ENCODE measurements at regions of chr6 and their contacts with region 1.

Region 1: DNA sequence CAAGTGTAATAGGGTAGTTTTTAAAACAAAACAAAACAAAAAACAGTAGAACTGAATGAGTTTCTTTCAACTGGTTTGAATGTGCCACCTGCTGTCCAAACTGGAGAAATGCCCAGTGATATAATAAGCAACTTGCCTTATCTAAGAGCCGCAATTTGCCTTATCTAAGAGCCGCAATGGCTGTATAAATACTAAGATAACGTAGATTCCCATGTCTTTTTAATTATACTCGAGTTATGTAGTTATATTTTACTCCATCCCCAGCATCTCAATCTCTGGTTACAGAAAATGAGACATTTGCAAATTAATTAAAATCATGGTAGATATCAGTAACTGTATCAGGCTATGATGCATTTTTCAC is 67.2 kb downstream of the RPP40 start:
- DNase-seq: no peak
- ATAC-seq: peak; percentile 50
- H3K4me3 Mint-ChIP-seq: no peak overlapping the region
- H3K27ac Mint-ChIP-seq: no peak overlapping the region
- H3K4me1 Mint-ChIP-seq: peaks cover 20% of the 10 kb centered on the region
- H3K27me3 Mint-ChIP-seq: no peaks in the 10 kb centered on the region
- CTCF ChIP-seq: no peak

Region 2: GRCh38 chr6:4055420-4056041 is 881.1 kb before region 1 on chr6:
- CTCF ChIA-PET with region 1: no interaction called
- POLR2A ChIA-PET with region 1: no interaction called
- intact Hi-C with region 1: loop called (anchors 10 kb)
- DNase-seq: no peak
- ATAC-seq: no peak
- H3K4me3 Mint-ChIP-seq: no peak overlapping the region
- H3K27ac Mint-ChIP-seq: no peak overlapping the region
- H3K4me1 Mint-ChIP-seq: no peaks in the 10 kb centered on the region
- H3K27me3 Mint-ChIP-seq: no peaks in the 10 kb centered on the region
- CTCF ChIP-seq: no peak

Region 3: DNA sequence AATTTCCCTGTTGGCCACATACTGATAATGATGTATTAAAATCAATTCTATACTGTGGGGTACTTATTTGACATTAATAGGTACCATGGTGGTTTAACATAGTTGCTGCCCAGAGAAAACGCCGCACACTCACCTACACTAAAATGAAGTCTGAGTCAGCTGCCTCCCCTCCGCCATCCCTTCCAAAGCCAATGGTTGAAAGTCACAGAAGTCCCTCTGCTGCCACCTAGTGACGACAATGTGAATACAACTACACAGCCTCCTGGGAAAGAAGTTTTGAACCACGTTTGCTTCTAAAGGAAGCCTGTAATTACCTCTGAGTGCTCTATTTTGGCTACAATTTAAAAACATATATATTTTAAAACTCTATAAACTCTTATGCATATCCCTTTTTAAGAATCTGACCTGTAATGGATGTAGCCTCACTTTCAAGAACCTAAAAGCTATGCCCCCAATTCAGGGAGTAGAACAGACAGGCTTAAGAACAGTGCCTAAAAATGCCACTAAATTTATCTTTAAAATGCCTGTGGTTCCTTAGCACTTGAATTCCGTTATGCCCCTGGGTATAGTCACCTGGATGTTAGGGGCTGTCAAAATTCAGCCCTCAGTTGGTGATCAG is 780.7 kb before region 1 on chr6:
- CTCF ChIA-PET with region 1: no interaction called
- POLR2A ChIA-PET with region 1: no interaction called
- intact Hi-C with region 1: loop called (anchors 10 kb)
- DNase-seq: no peak
- ATAC-seq: peak; percentile 84
- H3K4me3 Mint-ChIP-seq: no peak overlapping the region
- H3K27ac Mint-ChIP-seq: peak overlapping the region; percentile 5
- H3K4me1 Mint-ChIP-seq: peaks cover 34% of the 10 kb centered on the region
- H3K27me3 Mint-ChIP-seq: no peaks in the 10 kb centered on the region
- CTCF ChIP-seq: peak; percentile 68

Region 4: GRCh38 chr6:4180652-4181255 is 755.9 kb before region 1 on chr6:
- CTCF ChIA-PET with region 1: no interaction called
- POLR2A ChIA-PET with region 1: no interaction called
- intact Hi-C with region 1: no loop called
- DNase-seq: no peak
- ATAC-seq: no peak
- H3K4me3 Mint-ChIP-seq: no peak overlapping the region
- H3K27ac Mint-ChIP-seq: no peak overlapping the region
- H3K4me1 Mint-ChIP-seq: no peaks in the 10 kb centered on the region
- H3K27me3 Mint-ChIP-seq: peaks cover 17% of the 10 kb centered on the region
- CTCF ChIP-seq: no peak

Region 5: DNA sequence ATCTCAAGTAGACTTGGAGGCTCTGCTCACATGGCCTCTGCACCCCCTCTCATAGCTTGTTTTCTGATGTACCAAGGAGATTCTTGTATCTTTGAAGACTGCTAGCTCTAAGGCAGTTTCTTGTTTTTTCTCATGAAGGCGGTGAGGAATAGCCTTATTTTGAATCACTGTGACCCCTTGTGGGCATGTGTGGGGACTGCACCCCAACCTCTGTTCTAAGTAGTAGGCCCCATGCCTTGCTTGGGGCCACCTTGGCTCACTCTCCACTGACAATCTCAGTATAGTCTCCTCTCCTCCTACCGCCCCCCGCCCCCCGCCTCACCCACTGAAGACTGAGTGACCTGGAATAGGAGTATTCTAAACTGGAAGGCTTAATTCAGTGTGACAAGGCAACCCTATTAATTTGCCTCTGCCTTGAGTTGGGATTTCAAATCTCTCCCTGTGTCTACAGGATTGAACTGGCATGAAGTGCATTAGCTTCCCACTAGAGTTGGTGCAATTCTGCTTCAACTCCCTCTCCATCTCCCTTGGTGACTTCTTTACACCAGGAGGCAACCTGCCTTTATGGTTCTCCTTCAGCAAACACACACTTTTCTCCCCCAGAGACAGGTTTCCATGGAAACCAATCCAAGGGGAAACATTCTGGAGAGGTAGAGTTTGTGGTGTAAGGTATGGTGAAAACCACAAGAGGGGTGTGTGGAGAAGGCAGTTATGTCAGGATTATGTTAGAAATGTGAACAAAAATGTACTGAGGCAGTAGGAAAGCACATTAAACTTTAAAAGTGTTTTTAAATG is 725.8 kb before region 1 on chr6:
- CTCF ChIA-PET with region 1: no interaction called
- POLR2A ChIA-PET with region 1: no interaction called
- intact Hi-C with region 1: loop called (anchors 2 kb)
- DNase-seq: peak; percentile 28
- ATAC-seq: peak; percentile 95
- H3K4me3 Mint-ChIP-seq: peak overlapping the region; percentile 44
- H3K27ac Mint-ChIP-seq: peak overlapping the region; percentile 75
- H3K4me1 Mint-ChIP-seq: peaks cover 38% of the 10 kb centered on the region
- H3K27me3 Mint-ChIP-seq: peaks cover 5% of the 10 kb centered on the region
- CTCF ChIP-seq: no peak

Region 6: GRCh38 chr6:4313044-4313686 is 623.5 kb before region 1 on chr6:
- CTCF ChIA-PET with region 1: interaction called, 3 read pairs
- POLR2A ChIA-PET with region 1: no interaction called
- intact Hi-C with region 1: loop called (anchors 2 kb)
- DNase-seq: no peak
- ATAC-seq: no peak
- H3K4me3 Mint-ChIP-seq: no peak overlapping the region
- H3K27ac Mint-ChIP-seq: no peak overlapping the region
- H3K4me1 Mint-ChIP-seq: peaks cover 17% of the 10 kb centered on the region
- H3K27me3 Mint-ChIP-seq: peaks cover 2% of the 10 kb centered on the region
- CTCF ChIP-seq: no peak

Region 7: DNA sequence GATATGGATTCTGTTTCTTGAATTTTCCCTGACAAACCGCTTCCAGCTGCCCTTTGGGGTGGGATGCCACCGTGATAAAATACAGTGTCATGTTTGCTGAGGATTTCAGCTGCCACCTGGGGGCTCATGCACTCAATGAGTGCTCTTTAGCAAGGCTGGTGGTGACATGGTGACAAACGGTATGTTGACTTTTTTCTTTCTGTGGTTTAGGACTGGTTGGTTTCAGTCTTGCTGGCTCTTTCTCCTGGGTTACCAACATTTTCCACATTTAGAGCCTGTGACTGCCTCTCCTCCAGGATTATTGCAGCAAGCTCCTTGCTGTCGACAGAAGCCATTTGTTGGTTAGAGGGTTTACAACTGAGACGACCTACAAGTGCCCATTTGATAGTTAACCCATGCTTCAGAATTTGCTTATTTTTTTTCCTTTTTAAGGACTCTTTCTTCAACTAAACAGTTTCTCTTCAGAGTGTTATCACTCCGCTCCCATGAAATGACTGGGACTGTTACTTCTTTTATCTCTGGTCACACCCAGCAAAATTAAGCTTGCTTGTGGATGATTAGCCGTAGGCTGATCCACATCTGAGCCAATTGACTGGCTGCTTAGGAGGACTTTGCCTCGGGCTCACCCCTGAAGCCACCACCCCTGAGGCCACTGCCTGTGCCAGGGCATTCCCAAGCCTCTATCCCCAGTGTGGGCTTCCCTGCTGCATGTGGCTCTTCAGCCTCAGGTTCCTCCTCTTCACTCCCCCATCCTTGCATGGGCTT is 208.8 kb before region 1 on chr6:
- CTCF ChIA-PET with region 1: no interaction called
- POLR2A ChIA-PET with region 1: no interaction called
- intact Hi-C with region 1: loop called (anchors 1 kb)
- DNase-seq: no peak
- ATAC-seq: no peak
- H3K4me3 Mint-ChIP-seq: no peak overlapping the region
- H3K27ac Mint-ChIP-seq: no peak overlapping the region
- H3K4me1 Mint-ChIP-seq: peaks cover 2% of the 10 kb centered on the region
- H3K27me3 Mint-ChIP-seq: peaks cover 13% of the 10 kb centered on the region
- CTCF ChIP-seq: no peak

Region 8: GRCh38 chr6:4987432-4987831 is 50.8 kb after region 1 on chr6:
- CTCF ChIA-PET with region 1: no interaction called
- POLR2A ChIA-PET with region 1: no interaction called
- intact Hi-C with region 1: no loop called
- DNase-seq: no peak
- ATAC-seq: no peak
- H3K4me3 Mint-ChIP-seq: no peak overlapping the region
- H3K27ac Mint-ChIP-seq: no peak overlapping the region
- H3K4me1 Mint-ChIP-seq: no peaks in the 10 kb centered on the region
- H3K27me3 Mint-ChIP-seq: no peaks in the 10 kb centered on the region
- CTCF ChIP-seq: no peak

Measured in activated B cell treated with CpG ODN at 0.5 μM for 24 hours (primary cell).